B cell (primary cell): ENCODE measurements at regions of chr5 and their contacts with region 1.

Region 1: DNA sequence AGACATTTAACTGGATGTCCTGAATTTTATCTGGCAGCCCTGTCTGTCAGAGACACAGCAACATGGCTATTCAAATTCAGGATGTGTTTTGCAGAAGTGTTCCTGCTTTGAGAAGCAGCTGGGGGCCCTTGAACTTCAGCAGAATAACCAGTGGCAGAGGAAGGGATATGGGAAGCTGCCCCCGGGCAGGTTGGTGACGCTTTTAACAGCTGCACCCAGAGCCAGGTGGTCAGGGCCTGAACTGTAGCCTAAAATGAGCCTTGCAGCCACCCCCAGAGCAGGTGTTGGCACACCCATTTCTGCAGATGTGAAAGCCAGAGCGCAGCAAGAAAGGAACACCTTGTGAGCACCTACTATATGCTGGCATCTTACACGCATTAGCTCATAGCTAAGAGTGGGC is 128.7 kb upstream of the BOD1 start:
- DNase-seq: peak; percentile 86
- ATAC-seq: peak; percentile 81
- H3K4me3 ChIP-seq: peak overlapping the region in 1 of 5 experiments; percentile 5
- H3K4me3 Mint-ChIP-seq: peak overlapping the region; percentile 57
- H3K27ac ChIP-seq: peak overlapping the region; percentile 37 to 62
- H3K27ac Mint-ChIP-seq: peak overlapping the region; percentile 86
- H3K4me1 ChIP-seq: peaks cover 40 to 60% of the 10 kb centered on the region in 2 donors
- H3K4me1 Mint-ChIP-seq: peaks cover 64% of the 10 kb centered on the region
- H3K27me3 ChIP-seq: no peaks in the 10 kb centered on the region
- H3K27me3 Mint-ChIP-seq: no peaks in the 10 kb centered on the region
- CTCF ChIP-seq: no peak

Region 2: DNA sequence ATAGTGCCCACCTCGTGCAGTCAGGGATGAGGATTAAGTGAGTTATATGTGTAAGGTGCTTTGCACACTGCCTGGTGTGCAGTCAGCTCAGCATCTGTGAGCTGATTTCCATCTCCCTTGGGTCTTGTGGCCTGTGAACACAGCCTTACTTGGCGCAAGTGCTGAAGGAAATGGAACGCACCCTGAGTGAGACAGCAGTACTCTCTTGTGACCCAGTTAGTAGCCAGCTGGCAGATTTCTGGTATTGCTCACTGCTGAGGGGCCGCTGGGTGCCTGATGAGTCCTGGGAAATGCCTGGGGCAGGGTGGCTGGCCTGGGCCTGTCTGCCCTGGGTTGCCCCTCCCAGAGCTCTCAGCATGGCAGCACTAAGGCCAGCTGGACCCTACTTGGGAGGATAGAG is 37.7 kb before region 1 on chr5:
- CTCF ChIA-PET with region 1: interaction called, 3 read pairs
- POLR2A ChIA-PET with region 1: no interaction called
- intact Hi-C with region 1: loop called (anchors 5 kb)
- DNase-seq: peak; percentile 77
- ATAC-seq: peak; percentile 99
- H3K4me3 ChIP-seq: no peak overlapping the region
- H3K4me3 Mint-ChIP-seq: peak overlapping the region; percentile 55
- H3K27ac ChIP-seq: no peak overlapping the region
- H3K27ac Mint-ChIP-seq: peak overlapping the region; percentile 53
- H3K4me1 ChIP-seq: peaks cover 18 to 27% of the 10 kb centered on the region in 2 donors
- H3K4me1 Mint-ChIP-seq: peaks cover 36% of the 10 kb centered on the region
- H3K27me3 ChIP-seq: peaks cover 0 to 6% (median 0%) of the 10 kb centered on the region in 4 experiments
- H3K27me3 Mint-ChIP-seq: no peaks in the 10 kb centered on the region
- CTCF ChIP-seq: no peak

Region 3: GRCh38 chr5:173721256-173722232 is 23.6 kb before region 1 on chr5:
- CTCF ChIA-PET with region 1: no interaction called
- POLR2A ChIA-PET with region 1: interaction called, 11 read pairs
- intact Hi-C with region 1: no loop called
- DNase-seq: no peak
- ATAC-seq: no peak
- H3K4me3 ChIP-seq: no peak overlapping the region
- H3K4me3 Mint-ChIP-seq: no peak overlapping the region
- H3K27ac ChIP-seq: no peak overlapping the region
- H3K27ac Mint-ChIP-seq: no peak overlapping the region
- H3K4me1 ChIP-seq: no peaks in the 10 kb centered on the region
- H3K4me1 Mint-ChIP-seq: peaks cover 3% of the 10 kb centered on the region
- H3K27me3 ChIP-seq: peaks cover 0 to 5% (median 3%) of the 10 kb centered on the region in 4 experiments
- H3K27me3 Mint-ChIP-seq: no peaks in the 10 kb centered on the region
- CTCF ChIP-seq: no peak

Region 4: GRCh38 chr5:173757403-173758209 is 12.5 kb after region 1 on chr5:
- CTCF ChIA-PET with region 1: no interaction called
- POLR2A ChIA-PET with region 1: no interaction called
- intact Hi-C with region 1: no loop called
- DNase-seq: no peak
- ATAC-seq: no peak
- H3K4me3 ChIP-seq: no peak overlapping the region
- H3K4me3 Mint-ChIP-seq: no peak overlapping the region
- H3K27ac ChIP-seq: no peak overlapping the region
- H3K27ac Mint-ChIP-seq: no peak overlapping the region
- H3K4me1 ChIP-seq: peaks cover 0 to 3% of the 10 kb centered on the region in 2 donors
- H3K4me1 Mint-ChIP-seq: peaks cover 8% of the 10 kb centered on the region
- H3K27me3 ChIP-seq: no peaks in the 10 kb centered on the region
- H3K27me3 Mint-ChIP-seq: peaks cover 10% of the 10 kb centered on the region
- CTCF ChIP-seq: no peak

Region 5: DNA sequence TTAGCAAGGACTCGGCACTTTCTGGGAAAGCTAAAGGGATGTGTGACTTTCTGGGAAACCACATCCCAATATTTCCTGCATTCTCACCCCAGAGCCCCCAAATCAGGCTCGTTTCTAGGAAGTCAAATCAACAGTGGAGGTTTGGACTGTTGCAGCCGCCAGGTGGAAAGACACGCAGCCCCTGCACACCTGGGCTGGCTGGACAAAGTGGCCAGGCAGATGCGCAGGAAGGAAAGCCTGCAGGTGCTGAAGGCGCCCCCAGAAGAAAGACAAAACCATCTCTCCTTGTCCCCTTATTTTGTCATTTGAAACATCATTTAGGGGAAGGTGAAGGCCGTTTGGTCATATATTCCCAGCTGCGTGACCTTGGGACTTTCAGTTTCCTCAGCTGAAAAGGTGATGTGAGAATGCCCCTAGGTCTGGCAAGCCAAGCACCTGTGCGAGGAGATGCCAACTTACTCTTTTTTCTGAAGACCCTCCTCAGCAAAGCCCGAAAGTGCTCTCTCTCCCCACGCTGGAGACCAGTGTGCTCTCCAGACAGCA is 45.1 kb after region 1 on chr5:
- CTCF ChIA-PET with region 1: interaction called, 3 read pairs
- POLR2A ChIA-PET with region 1: no interaction called
- intact Hi-C with region 1: loop called (anchors 2 kb)
- DNase-seq: no peak
- ATAC-seq: no peak
- H3K4me3 ChIP-seq: no peak overlapping the region
- H3K4me3 Mint-ChIP-seq: no peak overlapping the region
- H3K27ac ChIP-seq: no peak overlapping the region
- H3K27ac Mint-ChIP-seq: no peak overlapping the region
- H3K4me1 ChIP-seq: peaks cover 21 to 35% of the 10 kb centered on the region in 2 donors
- H3K4me1 Mint-ChIP-seq: peaks cover 36% of the 10 kb centered on the region
- H3K27me3 ChIP-seq: no peaks in the 10 kb centered on the region
- H3K27me3 Mint-ChIP-seq: no peaks in the 10 kb centered on the region
- CTCF ChIP-seq: no peak

Region 6: GRCh38 chr5:173823711-173824528 is 78.8 kb after region 1 on chr5:
- CTCF ChIA-PET with region 1: interaction called, 5 read pairs
- POLR2A ChIA-PET with region 1: interaction called, 6 read pairs
- intact Hi-C with region 1: loop called (anchors 5 kb)
- DNase-seq: no peak
- ATAC-seq: no peak
- H3K4me3 ChIP-seq: no peak overlapping the region
- H3K4me3 Mint-ChIP-seq: peak overlapping the region; percentile 9
- H3K27ac ChIP-seq: peak overlapping the region; percentile 12 to 55
- H3K27ac Mint-ChIP-seq: peak overlapping the region; percentile 46
- H3K4me1 ChIP-seq: peaks cover 69 to 73% of the 10 kb centered on the region in 2 donors
- H3K4me1 Mint-ChIP-seq: peaks cover 74% of the 10 kb centered on the region
- H3K27me3 ChIP-seq: no peaks in the 10 kb centered on the region
- H3K27me3 Mint-ChIP-seq: no peaks in the 10 kb centered on the region
- CTCF ChIP-seq: no peak